ENCODE measurements at regions of chr1 and their contacts with region 1.

Region 1: GRCh38 chr1:223133824-223134435 is 9.1 kb downstream of the TLR5 start:
- DNase-seq: peak; percentile 94
- H3K4me3 Mint-ChIP-seq: peak overlapping the region; percentile 63
- H3K27ac Mint-ChIP-seq: no peak overlapping the region
- H3K4me1 Mint-ChIP-seq: peaks cover 45% of the 10 kb centered on the region
- H3K27me3 Mint-ChIP-seq: peaks cover 9% of the 10 kb centered on the region
- CTCF ChIP-seq: no peak

Region 2: GRCh38 chr1:222974496-222974895 is 159.4 kb before region 1 on chr1:
- CTCF ChIA-PET with region 1: no interaction called
- POLR2A ChIA-PET with region 1: no interaction called
- intact Hi-C with region 1: no loop called
- DNase-seq: peak; percentile 42
- H3K4me3 Mint-ChIP-seq: no peak overlapping the region
- H3K27ac Mint-ChIP-seq: no peak overlapping the region
- H3K4me1 Mint-ChIP-seq: peaks cover 6% of the 10 kb centered on the region
- H3K27me3 Mint-ChIP-seq: no peaks in the 10 kb centered on the region
- CTCF ChIP-seq: no peak

Region 3: GRCh38 chr1:223087291-223088255 is 46.4 kb before region 1 on chr1:
- CTCF ChIA-PET with region 1: interaction called, 21 read pairs
- POLR2A ChIA-PET with region 1: interaction called, 4 read pairs
- intact Hi-C with region 1: no loop called
- DNase-seq: no peak
- H3K4me3 Mint-ChIP-seq: no peak overlapping the region
- H3K27ac Mint-ChIP-seq: no peak overlapping the region
- H3K4me1 Mint-ChIP-seq: no peaks in the 10 kb centered on the region
- H3K27me3 Mint-ChIP-seq: peaks cover 52% of the 10 kb centered on the region
- CTCF ChIP-seq: no peak

Region 4: GRCh38 chr1:223153177-223154119 is 19.5 kb after region 1 on chr1:
- CTCF ChIA-PET with region 1: interaction called, 59 read pairs
- POLR2A ChIA-PET with region 1: interaction called, 3 read pairs
- intact Hi-C with region 1: no loop called
- DNase-seq: peak; percentile 30
- H3K4me3 Mint-ChIP-seq: no peak overlapping the region
- H3K27ac Mint-ChIP-seq: no peak overlapping the region
- H3K4me1 Mint-ChIP-seq: peaks cover 8% of the 10 kb centered on the region
- H3K27me3 Mint-ChIP-seq: no peaks in the 10 kb centered on the region
- CTCF ChIP-seq: no peak

Region 5: DNA sequence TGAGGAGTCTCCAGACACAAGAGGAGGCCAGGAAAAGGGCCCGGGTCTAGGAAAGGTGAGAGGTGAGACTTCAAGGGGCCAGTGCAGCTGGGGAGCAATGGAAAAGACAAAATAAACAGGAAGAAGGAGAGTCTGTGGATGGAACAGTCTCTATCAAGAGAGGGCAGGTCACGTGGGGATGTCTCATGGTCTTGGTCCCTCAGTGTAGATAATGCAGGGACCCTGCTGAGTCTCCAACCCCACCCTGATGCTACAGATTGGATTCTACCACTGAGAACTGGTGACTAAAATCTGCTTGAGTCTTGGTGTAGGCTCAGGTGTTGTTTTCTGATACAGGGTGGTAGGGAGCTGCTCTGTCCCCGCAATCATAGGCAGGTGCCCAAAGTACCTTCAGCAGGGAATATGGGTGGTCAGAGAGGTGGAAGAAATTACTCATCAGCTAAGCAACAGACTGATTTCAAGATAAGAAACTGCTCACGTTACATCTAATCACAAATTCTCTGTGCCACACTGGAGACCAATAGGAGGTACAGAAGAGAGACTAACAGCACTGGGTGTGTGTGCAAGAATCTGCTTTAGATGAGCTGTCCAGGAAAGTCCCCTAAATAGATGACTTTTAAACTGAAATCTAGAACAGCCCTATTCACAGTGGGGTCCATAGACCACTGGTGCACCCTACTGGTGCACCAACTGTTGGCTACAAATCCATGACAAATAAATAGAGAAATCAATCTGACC is 110.6 kb after region 1 on chr1:
- CTCF ChIA-PET with region 1: interaction called, 18 read pairs
- POLR2A ChIA-PET with region 1: interaction called, 9 read pairs
- intact Hi-C with region 1: loop called (anchors 2 kb)
- DNase-seq: peak; percentile 36
- H3K4me3 Mint-ChIP-seq: no peak overlapping the region
- H3K27ac Mint-ChIP-seq: no peak overlapping the region
- H3K4me1 Mint-ChIP-seq: peaks cover 7% of the 10 kb centered on the region
- H3K27me3 Mint-ChIP-seq: no peaks in the 10 kb centered on the region
- CTCF ChIP-seq: no peak

Region 6: DNA sequence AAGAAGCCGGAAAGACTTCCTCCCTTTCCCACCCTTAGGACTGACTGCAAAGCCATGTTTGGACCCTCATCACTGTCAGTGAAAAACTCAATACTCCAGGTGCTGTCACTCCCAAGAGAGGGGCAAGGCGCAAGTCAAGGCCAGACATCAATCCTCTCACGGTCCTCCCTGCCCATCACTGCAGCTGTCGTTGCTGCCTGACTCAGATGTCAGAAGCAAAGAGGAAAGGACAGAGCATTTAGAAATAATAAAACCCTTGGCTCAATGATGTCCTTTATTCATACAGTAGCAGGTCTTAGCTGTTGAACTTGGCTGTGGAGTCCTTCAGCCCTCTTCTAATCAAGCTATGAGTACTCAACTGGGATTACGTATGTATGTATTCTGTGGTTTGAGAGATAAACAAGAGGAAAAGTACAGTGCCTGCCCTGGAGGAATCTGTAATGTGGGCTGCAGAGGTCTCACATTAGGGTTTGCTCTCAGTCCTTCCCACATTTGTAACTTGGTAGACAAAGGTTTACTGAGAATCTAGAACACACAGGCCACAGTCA is 216.5 kb after region 1 on chr1:
- CTCF ChIA-PET with region 1: interaction called, 11 read pairs
- POLR2A ChIA-PET with region 1: interaction called, 3 read pairs
- intact Hi-C with region 1: no loop called
- DNase-seq: no peak
- H3K4me3 Mint-ChIP-seq: no peak overlapping the region
- H3K27ac Mint-ChIP-seq: no peak overlapping the region
- H3K4me1 Mint-ChIP-seq: peaks cover 2% of the 10 kb centered on the region
- H3K27me3 Mint-ChIP-seq: no peaks in the 10 kb centered on the region
- CTCF ChIP-seq: no peak

Region 7: DNA sequence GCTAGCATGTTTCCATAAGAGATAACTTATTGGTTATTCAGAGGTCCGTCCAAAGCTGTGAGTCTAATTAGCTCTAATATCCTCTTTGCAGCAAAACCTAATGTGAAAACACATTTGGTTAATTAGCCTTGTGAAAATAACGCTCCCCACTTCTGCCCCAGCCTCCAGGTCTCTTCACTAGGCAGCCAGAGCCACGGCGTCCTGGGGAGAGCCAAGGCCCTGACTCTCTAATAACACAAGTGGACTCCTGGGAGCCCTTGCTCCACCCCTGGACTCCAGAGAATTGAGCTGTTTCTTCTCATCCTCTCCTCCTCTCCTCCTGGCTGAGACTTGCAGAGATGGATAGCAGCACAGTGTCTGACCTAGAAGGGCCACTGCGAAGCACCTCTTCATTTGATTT is 338.1 kb after region 1 on chr1:
- CTCF ChIA-PET with region 1: interaction called, 10 read pairs
- POLR2A ChIA-PET with region 1: no interaction called
- intact Hi-C with region 1: no loop called
- DNase-seq: no peak
- H3K4me3 Mint-ChIP-seq: no peak overlapping the region
- H3K27ac Mint-ChIP-seq: no peak overlapping the region
- H3K4me1 Mint-ChIP-seq: no peaks in the 10 kb centered on the region
- H3K27me3 Mint-ChIP-seq: peaks cover 3% of the 10 kb centered on the region
- CTCF ChIP-seq: no peak

Region 8: DNA sequence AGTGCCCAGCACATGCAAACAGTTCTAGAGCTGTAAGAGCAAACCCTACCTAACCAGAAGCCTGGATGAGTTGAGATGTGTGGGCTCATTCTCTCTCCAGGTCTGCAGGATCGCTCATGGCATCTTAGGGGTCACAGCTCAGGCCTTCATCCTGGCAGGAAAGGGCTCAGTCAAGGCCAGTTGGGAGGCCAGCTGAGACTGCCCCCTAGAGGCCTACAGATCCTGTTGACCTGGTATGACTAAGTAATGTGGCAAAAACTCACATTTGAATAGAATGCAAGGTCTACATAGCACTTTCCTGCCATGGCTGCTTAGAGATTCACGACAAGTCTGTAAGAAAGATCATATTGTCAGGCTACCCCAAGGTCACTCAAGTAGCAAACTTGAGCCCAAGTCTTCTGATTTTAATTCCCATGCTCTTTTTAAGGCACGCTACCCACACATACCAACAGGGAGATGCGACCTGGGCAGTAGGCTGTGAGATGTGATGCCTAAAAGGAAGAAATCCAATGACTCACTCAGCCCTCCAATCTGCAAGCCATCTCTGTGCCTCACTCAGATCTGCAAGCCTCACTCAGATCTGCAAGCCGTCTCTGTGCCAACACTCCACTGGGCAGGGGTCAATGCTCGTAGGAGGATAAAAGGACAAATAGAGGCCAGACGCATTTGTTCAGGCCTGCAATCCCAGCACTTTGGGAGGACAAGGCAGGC is 536.7 kb after region 1 on chr1:
- CTCF ChIA-PET with region 1: interaction called, 324 read pairs
- POLR2A ChIA-PET with region 1: interaction called, 5 read pairs
- intact Hi-C with region 1: loop called (anchors 1 kb)
- DNase-seq: peak; percentile 87
- H3K4me3 Mint-ChIP-seq: no peak overlapping the region
- H3K27ac Mint-ChIP-seq: no peak overlapping the region
- H3K4me1 Mint-ChIP-seq: peaks cover 22% of the 10 kb centered on the region
- H3K27me3 Mint-ChIP-seq: no peaks in the 10 kb centered on the region
- CTCF ChIP-seq: peak; percentile 97

Measured in MCF 10A (cell line).